OCI-LY7 (cell line): ENCODE measurements at regions of chr2 and their contacts with region 1.

Region 1: GRCh38 chr2:55419679-55420438 is at the start of gene CCDC88A:
- DNase-seq: peak; percentile 96
- H3K4me3 ChIP-seq: peak within 1 kb of the TSS; percentile 81
- H3K27ac ChIP-seq: peak within 1 kb of the TSS; percentile 73
- H3K4me1 ChIP-seq: peaks cover 48% of the 10 kb centered on the region
- CTCF ChIP-seq: peak; percentile 41; the same call in 1 of the 2 replicates
- total RNA-seq, gene CCDC88A: 98.4 and 109 TPM in 2 replicates

Region 2: GRCh38 chr2:55282110-55282917 is 137.5 kb before region 1 on chr2:
- CTCF ChIA-PET with region 1: no interaction called
- POLR2A ChIA-PET with region 1: interaction called, 3 read pairs
- intact Hi-C with region 1: loop called (anchors 2 kb)
- DNase-seq: peak; percentile 89
- H3K4me3 ChIP-seq: peak overlapping the region; percentile 72
- H3K27ac ChIP-seq: peak overlapping the region; percentile 13
- H3K4me1 ChIP-seq: peaks cover 12% of the 10 kb centered on the region
- CTCF ChIP-seq: no peak

Region 3: GRCh38 chr2:55617175-55618024 is 197.5 kb after region 1 on chr2 and contains the start of gene PPP4R3B:
- CTCF ChIA-PET with region 1: no interaction called
- POLR2A ChIA-PET with region 1: no interaction called
- intact Hi-C with region 1: loop called (anchors 2 kb)
- DNase-seq: peak; percentile 99
- H3K4me3 ChIP-seq: peak within 1 kb of the TSS; percentile 96
- H3K27ac ChIP-seq: peak within 1 kb of the TSS; percentile 77
- H3K4me1 ChIP-seq: peaks cover 27% of the 10 kb centered on the region
- CTCF ChIP-seq: 0 out of 2 replicates have a peak, but pooled peaks have one; percentile 20
- total RNA-seq, gene PPP4R3B: 42.3 and 44.9 TPM in 2 replicates